ENCODE measurements at regions of chr13 and their contacts with region 1.

Region 1: GRCh38 chr13:65133094-65133493 is 2097.0 kb downstream of the PCDH9 start:
- DNase-seq: no peak
- ATAC-seq: no peak
- H3K4me3 ChIP-seq: no peak overlapping the region
- H3K27ac ChIP-seq: no peak overlapping the region
- H3K4me1 ChIP-seq: no peaks in the 10 kb centered on the region
- H3K27me3 ChIP-seq: no peaks in the 10 kb centered on the region
- CTCF ChIP-seq: no peak
- EP300 ChIP-seq: no peak
- POLR2A ChIP-seq: no peak
- RAD21 ChIP-seq: no peak

Region 2: GRCh38 chr13:65011378-65011777 is 121.7 kb before region 1 on chr13:
- CTCF ChIA-PET with region 1: no interaction called
- POLR2A ChIA-PET with region 1: no interaction called
- RAD21 ChIA-PET with region 1: no interaction called
- SMC1A ChIA-PET with region 1: no interaction called
- in situ Hi-C with region 1: no loop called
- intact Hi-C with region 1: no loop called
- DNase-seq: no peak
- ATAC-seq: no peak
- H3K4me3 ChIP-seq: no peak overlapping the region
- H3K27ac ChIP-seq: no peak overlapping the region
- H3K4me1 ChIP-seq: no peaks in the 10 kb centered on the region
- H3K27me3 ChIP-seq: no peaks in the 10 kb centered on the region
- CTCF ChIP-seq: no peak
- EP300 ChIP-seq: no peak
- POLR2A ChIP-seq: no peak
- RAD21 ChIP-seq: no peak

Region 3: GRCh38 chr13:65074248-65074647 is 58.8 kb before region 1 on chr13:
- CTCF ChIA-PET with region 1: no interaction called
- POLR2A ChIA-PET with region 1: no interaction called
- RAD21 ChIA-PET with region 1: no interaction called
- SMC1A ChIA-PET with region 1: no interaction called
- in situ Hi-C with region 1: no loop called
- intact Hi-C with region 1: loop called (anchors 10 kb)
- DNase-seq: no peak
- ATAC-seq: no peak
- H3K4me3 ChIP-seq: no peak overlapping the region
- H3K27ac ChIP-seq: no peak overlapping the region
- H3K4me1 ChIP-seq: no peaks in the 10 kb centered on the region
- H3K27me3 ChIP-seq: no peaks in the 10 kb centered on the region
- CTCF ChIP-seq: no peak
- EP300 ChIP-seq: no peak
- POLR2A ChIP-seq: no peak
- RAD21 ChIP-seq: no peak

Region 4: DNA sequence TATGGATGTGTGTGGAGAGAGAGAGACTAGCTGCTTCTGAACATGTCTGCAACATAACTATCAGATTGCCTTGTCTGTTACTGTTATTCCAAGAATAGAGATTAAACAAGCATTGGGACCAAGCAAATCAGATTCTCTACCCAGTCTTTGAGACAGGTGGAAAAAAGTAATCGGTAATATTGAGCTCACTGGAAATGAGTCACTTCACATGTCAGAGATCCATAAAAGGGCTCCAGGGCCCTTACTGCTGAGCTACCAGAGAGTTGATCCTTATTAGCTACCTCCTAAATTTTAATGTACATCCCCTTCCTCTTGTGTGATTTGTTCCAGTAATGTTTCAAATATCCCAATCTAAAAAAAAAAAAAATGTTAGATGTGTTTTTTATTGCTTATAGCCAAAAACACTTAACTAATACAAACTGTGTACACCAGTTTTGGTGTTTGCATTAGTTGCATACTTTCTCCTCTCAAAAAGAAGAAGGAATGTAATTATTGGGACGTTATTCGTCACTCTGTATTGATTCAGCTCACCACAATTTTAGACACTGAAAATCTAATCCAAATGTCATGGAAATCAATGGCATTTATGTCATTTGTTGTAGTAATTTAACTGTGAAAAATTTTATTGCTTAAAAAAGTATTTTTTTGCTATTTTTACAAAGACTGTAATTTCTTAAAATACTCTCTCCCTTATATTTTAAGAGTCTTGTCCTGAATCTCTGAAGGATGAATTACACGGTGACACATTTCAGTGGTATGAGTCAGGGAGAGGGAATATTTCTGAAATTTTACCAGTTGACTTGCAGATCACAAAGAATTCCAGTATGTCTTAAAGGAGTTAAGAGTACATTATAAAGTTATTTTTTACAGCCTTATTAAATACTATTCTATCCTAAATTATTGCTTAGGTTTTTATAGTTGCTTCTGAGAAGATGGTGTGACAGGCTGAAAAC is 20.7 kb before region 1 on chr13:
- CTCF ChIA-PET with region 1: no interaction called
- POLR2A ChIA-PET with region 1: no interaction called
- RAD21 ChIA-PET with region 1: no interaction called
- SMC1A ChIA-PET with region 1: no interaction called
- in situ Hi-C with region 1: no loop called
- intact Hi-C with region 1: no loop called
- DNase-seq: no peak
- ATAC-seq: no peak
- H3K4me3 ChIP-seq: no peak overlapping the region
- H3K27ac ChIP-seq: no peak overlapping the region
- H3K4me1 ChIP-seq: no peaks in the 10 kb centered on the region
- H3K27me3 ChIP-seq: no peaks in the 10 kb centered on the region
- CTCF ChIP-seq: no peak
- EP300 ChIP-seq: no peak
- POLR2A ChIP-seq: no peak
- RAD21 ChIP-seq: no peak

Measured in GM12878 (cell line).